H1 (cell line): ENCODE measurements at regions of chr4 and their contacts with region 1.

Region 1: GRCh38 chr4:88211473-88212252 is 53.2 kb upstream of the ABCG2 start:
- DNase-seq: peak in 1 of 2 experiments; percentile 68
- H3K4me3 ChIP-seq: no peak overlapping the region
- H3K27ac ChIP-seq: no peak overlapping the region
- H3K4me1 ChIP-seq: peaks cover 0 to 2% (median under 1%) of the 10 kb centered on the region in 4 experiments; a peak in 2 of 7 replicates
- H3K27me3 ChIP-seq: no peaks in the 10 kb centered on the region
- CTCF ChIP-seq: peak in 2 of 3 experiments; percentile 50 to 63; a peak in 2 of 4 replicates
- EP300 ChIP-seq: no peak
- POLR2A ChIP-seq: no peak
- RAD21 ChIP-seq: peak; percentile 92 to 97

Region 2: GRCh38 chr4:88033309-88033708 is 178.4 kb before region 1 on chr4:
- CTCF ChIA-PET with region 1: interaction called, 46 read pairs
- POLR2A ChIA-PET with region 1: no interaction called
- DNase-seq: no peak
- H3K4me3 ChIP-seq: no peak overlapping the region
- H3K27ac ChIP-seq: no peak overlapping the region
- H3K4me1 ChIP-seq: no peaks in the 10 kb centered on the region
- H3K27me3 ChIP-seq: no peaks in the 10 kb centered on the region
- CTCF ChIP-seq: peak in 2 of 3 experiments; percentile 55 to 61; a peak in 2 of 4 replicates
- EP300 ChIP-seq: no peak
- POLR2A ChIP-seq: no peak
- RAD21 ChIP-seq: peak; percentile 72 to 78

Region 3: DNA sequence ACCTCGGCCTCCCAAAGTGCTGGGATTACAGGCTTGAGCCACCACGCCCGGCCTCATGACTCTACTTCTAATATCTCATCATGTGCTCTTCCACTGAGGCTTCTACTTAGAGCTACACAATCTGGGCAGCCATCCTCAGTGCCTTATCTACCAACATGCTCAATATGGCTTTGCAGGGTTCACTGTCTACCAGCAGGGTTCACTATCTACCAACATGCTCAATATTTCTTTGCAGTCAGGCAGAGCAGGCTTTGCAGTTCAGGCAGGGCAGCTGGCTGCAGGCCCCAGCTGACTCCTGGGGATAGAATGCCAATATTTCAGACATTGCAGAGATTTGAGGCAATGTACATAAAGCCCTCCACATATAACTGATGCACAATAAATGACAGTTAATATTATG is 156.8 kb before region 1 on chr4:
- CTCF ChIA-PET with region 1: interaction called, 79 read pairs
- POLR2A ChIA-PET with region 1: no interaction called
- DNase-seq: no peak
- H3K4me3 ChIP-seq: no peak overlapping the region
- H3K27ac ChIP-seq: no peak overlapping the region
- H3K4me1 ChIP-seq: no peaks in the 10 kb centered on the region; a peak in 1 of 7 replicates
- H3K27me3 ChIP-seq: no peaks in the 10 kb centered on the region
- CTCF ChIP-seq: peak in 2 of 3 experiments; percentile 72 to 79; a peak in 3 of 4 replicates
- EP300 ChIP-seq: no peak
- POLR2A ChIP-seq: no peak
- RAD21 ChIP-seq: peak; percentile 89 to 98

Region 4: GRCh38 chr4:88060431-88060830 is 151.2 kb before region 1 on chr4:
- CTCF ChIA-PET with region 1: interaction called, 79 read pairs
- POLR2A ChIA-PET with region 1: no interaction called
- DNase-seq: no peak
- H3K4me3 ChIP-seq: no peak overlapping the region
- H3K27ac ChIP-seq: no peak overlapping the region
- H3K4me1 ChIP-seq: no peaks in the 10 kb centered on the region
- H3K27me3 ChIP-seq: no peaks in the 10 kb centered on the region
- CTCF ChIP-seq: no peak
- EP300 ChIP-seq: no peak
- POLR2A ChIP-seq: no peak
- RAD21 ChIP-seq: no peak

Region 5: DNA sequence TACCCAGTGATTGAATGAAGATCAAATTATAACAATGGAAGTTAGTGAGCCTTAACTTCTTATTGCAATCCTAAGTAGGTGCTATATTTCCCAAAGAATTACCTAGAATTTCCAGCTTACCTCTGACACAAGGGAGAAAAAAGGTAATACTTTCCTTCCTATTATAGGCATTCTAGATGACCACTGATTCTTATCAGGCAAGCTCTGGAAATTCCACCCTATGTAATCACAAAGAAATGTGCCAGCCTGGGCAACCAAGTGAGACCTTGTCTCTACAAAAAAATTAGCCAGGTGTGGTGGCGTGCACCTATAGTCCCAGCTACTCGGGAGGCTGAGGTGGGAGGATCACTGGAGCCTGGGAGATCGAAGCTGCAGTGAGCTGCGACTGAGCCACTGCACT is 125.1 kb before region 1 on chr4:
- CTCF ChIA-PET with region 1: interaction called, 41 read pairs
- POLR2A ChIA-PET with region 1: no interaction called
- DNase-seq: no peak
- H3K4me3 ChIP-seq: no peak overlapping the region
- H3K27ac ChIP-seq: no peak overlapping the region
- H3K4me1 ChIP-seq: no peaks in the 10 kb centered on the region
- H3K27me3 ChIP-seq: no peaks in the 10 kb centered on the region
- CTCF ChIP-seq: no peak
- EP300 ChIP-seq: no peak
- POLR2A ChIP-seq: no peak
- RAD21 ChIP-seq: no peak

Region 6: GRCh38 chr4:88104902-88105610 is 106.6 kb before region 1 on chr4:
- CTCF ChIA-PET with region 1: no interaction called
- POLR2A ChIA-PET with region 1: no interaction called
- DNase-seq: no peak
- H3K4me3 ChIP-seq: no peak overlapping the region
- H3K27ac ChIP-seq: no peak overlapping the region
- H3K4me1 ChIP-seq: no peaks in the 10 kb centered on the region
- H3K27me3 ChIP-seq: no peaks in the 10 kb centered on the region
- CTCF ChIP-seq: no peak
- EP300 ChIP-seq: no peak
- POLR2A ChIP-seq: no peak
- RAD21 ChIP-seq: no peak

Region 7: DNA sequence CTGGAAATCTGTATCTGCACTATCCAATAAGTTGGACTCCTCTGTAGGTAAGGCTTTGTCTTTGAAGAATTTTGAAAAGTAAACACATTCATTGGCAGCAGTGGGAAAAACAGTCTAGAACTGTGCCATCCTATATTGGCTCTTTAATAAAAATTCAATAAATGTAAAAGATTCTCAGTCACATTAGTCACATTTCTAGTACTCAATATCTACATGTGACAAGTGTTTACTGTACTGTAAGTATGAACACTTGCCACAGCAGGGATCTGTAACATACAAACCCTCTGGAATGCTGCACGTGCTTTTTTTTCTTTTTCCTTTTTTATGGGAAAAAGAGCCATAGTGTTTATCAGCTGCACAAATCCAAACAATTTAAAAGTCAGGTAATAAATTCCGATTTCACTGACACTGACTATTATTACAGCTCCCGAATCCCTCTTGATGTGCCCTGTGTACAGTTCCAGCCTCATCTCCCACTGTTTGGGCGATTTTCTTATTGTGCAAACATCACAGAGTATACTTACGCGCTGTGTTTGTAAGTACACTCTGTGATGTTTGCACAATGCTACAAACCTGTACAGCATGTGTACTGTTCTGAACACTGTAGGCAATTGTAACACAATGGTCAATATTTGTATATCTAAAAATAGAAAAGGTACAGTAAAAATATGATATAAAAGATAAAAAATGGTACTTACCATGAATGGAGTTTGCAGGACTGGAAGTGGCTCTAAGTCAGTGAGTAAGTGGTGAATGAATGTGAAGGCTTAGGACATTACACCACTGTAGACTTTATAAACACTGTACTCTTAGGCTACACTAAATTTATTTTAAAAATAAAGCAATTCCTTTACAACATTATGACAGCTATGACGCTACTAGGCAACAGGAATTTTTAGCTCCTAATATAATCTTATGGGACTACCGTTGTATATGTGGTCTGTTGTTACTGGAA is 303.2 kb after region 1 on chr4:
- CTCF ChIA-PET with region 1: interaction called, 112 read pairs
- POLR2A ChIA-PET with region 1: no interaction called
- DNase-seq: no peak
- H3K4me3 ChIP-seq: no peak overlapping the region
- H3K27ac ChIP-seq: no peak overlapping the region
- H3K4me1 ChIP-seq: peaks cover 0 to 2% (median 0%) of the 10 kb centered on the region in 4 experiments; a peak in 1 of 7 replicates
- H3K27me3 ChIP-seq: no peaks in the 10 kb centered on the region
- CTCF ChIP-seq: no peak
- EP300 ChIP-seq: no peak
- POLR2A ChIP-seq: no peak
- RAD21 ChIP-seq: no peak